ENCODE measurements at regions of chr11 and their contacts with region 1.

Region 1: DNA sequence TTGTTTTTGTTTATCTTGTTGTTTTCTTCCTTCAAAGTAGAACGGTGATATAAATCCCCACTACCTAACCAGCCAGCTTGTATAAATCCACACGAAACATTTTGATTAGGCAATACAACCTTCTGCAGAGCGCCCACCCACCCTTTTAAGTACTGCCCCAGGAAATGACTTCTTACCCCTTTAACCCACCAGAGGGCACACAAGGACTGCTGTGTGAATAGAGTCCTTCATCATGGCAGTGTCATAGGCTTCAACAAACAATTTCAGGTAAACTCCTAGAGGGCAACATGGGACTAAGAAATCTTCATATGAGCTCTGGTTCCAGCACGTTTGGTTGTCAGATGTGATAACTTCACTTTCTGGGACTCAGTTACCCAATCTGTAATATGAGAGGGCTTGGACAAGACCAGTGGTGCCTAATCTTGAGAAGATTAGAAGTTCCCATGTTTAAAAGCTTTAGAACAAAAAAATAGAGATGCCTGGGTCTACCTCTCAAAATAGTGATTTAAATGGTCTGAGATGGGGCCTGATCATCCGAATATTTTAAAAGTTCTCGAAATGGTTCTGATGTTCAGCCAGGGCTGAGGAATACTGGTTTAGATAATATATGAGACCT is 56.1 kb downstream of the PIWIL4 start:
- DNase-seq: peak in 1 of 3 donors; percentile 57
- ATAC-seq: peak; percentile 75
- H3K4me3 ChIP-seq: no peak overlapping the region
- H3K4me1 ChIP-seq: no peaks in the 10 kb centered on the region
- CTCF ChIP-seq: peak; percentile 35

Region 2: GRCh38 chr11:94731880-94732601 is 108.8 kb after region 1 on chr11:
- intact Hi-C with region 1: loop called in 1 of 2 experiments (anchors 10 kb)
- DNase-seq: no peak
- ATAC-seq: peak; percentile 49
- H3K4me3 ChIP-seq: no peak overlapping the region
- H3K4me1 ChIP-seq: no peaks in the 10 kb centered on the region
- CTCF ChIP-seq: no peak

Region 3: GRCh38 chr11:94897330-94897768 is 274.1 kb after region 1 on chr11:
- intact Hi-C with region 1: loop called (anchors 10 kb)
- DNase-seq: peak in 1 of 3 donors; percentile 65
- ATAC-seq: peak; percentile 61
- H3K4me3 ChIP-seq: no peak overlapping the region
- H3K4me1 ChIP-seq: no peaks in the 10 kb centered on the region
- CTCF ChIP-seq: peak; percentile 64